ENCODE measurements at regions of chr9 and their contacts with region 1.

Region 1: GRCh38 chr9:9612270-9612669 is 1000.5 kb downstream of the PTPRD start:
- DNase-seq: peak; percentile 95
- H3K4me3 ChIP-seq: no peak overlapping the region
- H3K27ac ChIP-seq: peak overlapping the region; percentile 82
- H3K4me1 ChIP-seq: peaks cover 53% of the 10 kb centered on the region
- CTCF ChIP-seq: no peak; the same call in 1 of the 2 replicates

Region 2: GRCh38 chr9:9437641-9438040 is 174.6 kb before region 1 on chr9:
- CTCF ChIA-PET with region 1: no interaction called
- POLR2A ChIA-PET with region 1: no interaction called
- intact Hi-C with region 1: no loop called
- DNase-seq: no peak
- H3K4me3 ChIP-seq: no peak overlapping the region
- H3K27ac ChIP-seq: no peak overlapping the region
- H3K4me1 ChIP-seq: no peaks in the 10 kb centered on the region
- CTCF ChIP-seq: no peak

Region 3: DNA sequence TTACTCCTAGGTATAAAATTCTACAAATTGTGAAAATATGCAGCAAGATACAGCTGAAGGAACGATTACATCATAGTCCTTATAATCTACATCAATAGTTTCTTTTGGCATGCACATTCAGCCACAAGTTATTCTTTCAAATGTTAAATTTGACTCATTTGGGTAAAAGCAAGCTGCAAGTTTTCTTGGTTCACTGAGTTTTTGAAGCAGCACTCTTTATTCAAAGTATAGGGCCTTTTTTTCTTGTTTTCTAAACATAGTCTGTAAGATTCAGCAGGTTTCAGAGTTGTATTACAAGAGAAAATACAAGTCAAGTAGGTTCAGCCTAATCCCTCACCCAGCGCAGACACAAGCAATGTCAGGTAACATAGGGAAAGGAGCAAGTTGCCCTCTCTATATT is 19.0 kb after region 1 on chr9:
- CTCF ChIA-PET with region 1: no interaction called
- POLR2A ChIA-PET with region 1: interaction called, 6 read pairs
- intact Hi-C with region 1: loop called (anchors 2 kb)
- DNase-seq: no peak
- H3K4me3 ChIP-seq: no peak overlapping the region
- H3K27ac ChIP-seq: no peak overlapping the region
- H3K4me1 ChIP-seq: peaks cover 27% of the 10 kb centered on the region
- CTCF ChIP-seq: no peak

Region 4: GRCh38 chr9:9674461-9674860 is 62.2 kb after region 1 on chr9:
- CTCF ChIA-PET with region 1: no interaction called
- POLR2A ChIA-PET with region 1: no interaction called
- intact Hi-C with region 1: no loop called
- DNase-seq: no peak
- H3K4me3 ChIP-seq: no peak overlapping the region
- H3K27ac ChIP-seq: no peak overlapping the region
- H3K4me1 ChIP-seq: no peaks in the 10 kb centered on the region
- CTCF ChIP-seq: no peak

Region 5: GRCh38 chr9:9729082-9729481 is 116.8 kb after region 1 on chr9:
- CTCF ChIA-PET with region 1: no interaction called
- POLR2A ChIA-PET with region 1: interaction called, 4 read pairs
- intact Hi-C with region 1: loop called (anchors 5 kb)
- DNase-seq: no peak
- H3K4me3 ChIP-seq: no peak overlapping the region
- H3K27ac ChIP-seq: no peak overlapping the region
- H3K4me1 ChIP-seq: peaks cover 25% of the 10 kb centered on the region
- CTCF ChIP-seq: no peak

Region 6: DNA sequence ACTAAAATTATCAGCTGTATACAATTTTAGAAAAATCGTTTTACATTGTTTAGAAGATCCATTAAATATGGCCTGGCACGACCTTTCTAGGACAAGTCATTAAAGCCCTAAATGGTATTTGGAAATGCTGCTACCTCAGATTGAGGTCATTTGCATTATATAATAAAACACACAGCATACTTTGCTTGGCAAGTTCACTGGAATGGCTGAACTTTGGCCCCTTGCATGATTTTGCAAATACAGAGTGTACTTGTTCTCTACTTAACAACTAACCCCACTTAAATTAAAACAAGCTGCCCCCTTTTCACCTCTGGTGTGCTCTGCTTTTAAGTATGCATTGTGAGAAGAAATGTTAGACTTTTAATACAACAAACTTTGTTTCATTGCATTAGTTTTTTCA is 140.5 kb after region 1 on chr9:
- CTCF ChIA-PET with region 1: no interaction called
- POLR2A ChIA-PET with region 1: interaction called, 5 read pairs
- intact Hi-C with region 1: loop called (anchors 1 kb)
- DNase-seq: no peak
- H3K4me3 ChIP-seq: no peak overlapping the region
- H3K27ac ChIP-seq: no peak overlapping the region
- H3K4me1 ChIP-seq: peaks cover 3% of the 10 kb centered on the region
- CTCF ChIP-seq: no peak

Region 7: GRCh38 chr9:9904041-9904440 is 291.8 kb after region 1 on chr9:
- CTCF ChIA-PET with region 1: interaction called, 6 read pairs
- POLR2A ChIA-PET with region 1: interaction called, 25 read pairs
- intact Hi-C with region 1: loop called (anchors 2 kb)
- DNase-seq: peak; percentile 38
- H3K4me3 ChIP-seq: peak overlapping the region; percentile 33
- H3K27ac ChIP-seq: peak overlapping the region; percentile 69
- H3K4me1 ChIP-seq: peaks cover 33% of the 10 kb centered on the region
- CTCF ChIP-seq: no peak

Region 8: DNA sequence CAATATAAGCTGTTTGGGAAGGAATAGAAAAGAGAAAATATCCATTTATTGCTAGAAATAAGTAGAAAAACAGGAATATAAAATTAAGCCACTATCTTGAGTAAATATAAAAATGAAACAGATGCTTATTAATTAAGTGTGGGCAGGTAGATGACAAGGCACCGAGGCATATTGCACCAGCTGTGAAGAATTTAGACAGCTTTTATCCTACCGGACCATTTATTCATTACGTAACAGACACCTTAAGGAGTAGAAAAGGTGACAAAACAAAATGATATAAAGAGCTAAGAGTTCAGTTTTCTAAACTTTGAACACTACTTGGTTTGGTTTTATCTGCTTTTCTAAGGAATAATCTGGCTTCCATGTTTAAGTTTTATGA is 596.4 kb after region 1 on chr9:
- CTCF ChIA-PET with region 1: no interaction called
- POLR2A ChIA-PET with region 1: no interaction called
- intact Hi-C with region 1: loop called (anchors 10 kb)
- DNase-seq: peak; percentile 2
- H3K4me3 ChIP-seq: peak overlapping the region; percentile 66
- H3K27ac ChIP-seq: peak overlapping the region; percentile 57
- H3K4me1 ChIP-seq: peaks cover 12% of the 10 kb centered on the region
- CTCF ChIP-seq: no peak

Measured in OCI-LY7 (cell line).